Common myeloid progenitor, CD34-positive (primary cell): ENCODE measurements at regions of chr11 and their contacts with region 1.

Region 1: GRCh38 chr11:19561011-19561410 is 151.6 kb upstream of the NAV2 start:
- DNase-seq: no peak
- H3K4me3 ChIP-seq: no peak overlapping the region
- H3K27ac ChIP-seq: no peak overlapping the region
- H3K4me1 ChIP-seq: peaks cover 0 to 11% (median 3%) of the 10 kb centered on the region in 4 experiments
- H3K27me3 ChIP-seq: peaks cover 2 to 22% (median 9%) of the 10 kb centered on the region in 5 experiments

Region 2: GRCh38 chr11:19658344-19658743 is 97.3 kb after region 1 on chr11:
- CTCF ChIA-PET with region 1: interaction called, 10 read pairs
- POLR2A ChIA-PET with region 1: no interaction called
- DNase-seq: peak; percentile 14 to 48 (median 45)
- H3K4me3 ChIP-seq: no peak overlapping the region
- H3K27ac ChIP-seq: no peak overlapping the region
- H3K4me1 ChIP-seq: peaks cover 0 to 1% (median 0%) of the 10 kb centered on the region in 4 experiments
- H3K27me3 ChIP-seq: no peaks in the 10 kb centered on the region

Region 3: GRCh38 chr11:19723572-19724342 is 162.7 kb after region 1 on chr11:
- CTCF ChIA-PET with region 1: interaction called, 12 read pairs
- POLR2A ChIA-PET with region 1: no interaction called
- DNase-seq: peak in 2 of 3 donors; percentile 60 to 77
- H3K4me3 ChIP-seq: no peak overlapping the region
- H3K27ac ChIP-seq: no peak overlapping the region
- H3K4me1 ChIP-seq: peaks cover 0 to 10% (median 6%) of the 10 kb centered on the region in 4 experiments
- H3K27me3 ChIP-seq: peaks cover 0 to 13% (median 0%) of the 10 kb centered on the region in 5 experiments